ENCODE measurements at regions of chr2 and their contacts with region 1.

Region 1: DNA sequence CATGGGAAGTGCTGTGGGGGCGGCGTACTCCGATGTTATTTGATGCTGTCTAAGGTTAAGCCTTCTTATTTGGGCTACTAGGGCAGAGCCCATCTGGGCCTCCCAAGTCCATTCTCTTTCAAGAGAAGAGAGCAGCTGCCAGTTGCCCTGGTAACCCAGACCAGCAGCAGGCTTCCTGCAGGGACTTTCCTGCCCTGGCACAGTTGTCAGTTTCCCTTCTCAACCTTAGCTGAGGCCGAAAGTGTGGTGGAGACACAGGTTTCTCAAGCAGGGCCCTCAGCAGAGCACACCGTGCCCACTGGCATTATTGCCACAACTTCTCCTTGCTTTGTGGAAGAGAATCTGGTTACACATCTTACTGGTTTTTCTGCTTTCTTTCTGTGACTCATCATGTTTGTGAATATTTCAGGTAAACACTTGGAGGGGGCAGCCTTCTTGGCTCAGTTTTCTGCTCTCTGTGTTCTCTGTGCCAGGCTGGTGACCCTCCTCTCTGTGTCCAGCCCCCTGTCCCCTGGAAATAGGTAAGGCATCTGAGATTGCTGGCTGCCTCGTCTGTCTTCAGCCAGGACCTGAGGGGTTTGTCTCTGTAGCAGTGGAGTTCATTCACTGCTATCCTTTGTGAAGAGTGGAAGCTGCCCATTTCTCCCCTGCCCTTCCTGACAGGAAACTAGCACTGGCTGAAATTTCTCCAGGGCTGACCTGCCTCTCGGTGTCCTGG is 111.0 kb downstream of the B3GNT2 start:
- DNase-seq: peak; percentile 73
- H3K4me3 Mint-ChIP-seq: peak overlapping the region; percentile 22
- H3K27ac Mint-ChIP-seq: peak overlapping the region; percentile 72
- H3K4me1 Mint-ChIP-seq: peaks cover 75% of the 10 kb centered on the region
- H3K27me3 Mint-ChIP-seq: no peaks in the 10 kb centered on the region

Region 2: DNA sequence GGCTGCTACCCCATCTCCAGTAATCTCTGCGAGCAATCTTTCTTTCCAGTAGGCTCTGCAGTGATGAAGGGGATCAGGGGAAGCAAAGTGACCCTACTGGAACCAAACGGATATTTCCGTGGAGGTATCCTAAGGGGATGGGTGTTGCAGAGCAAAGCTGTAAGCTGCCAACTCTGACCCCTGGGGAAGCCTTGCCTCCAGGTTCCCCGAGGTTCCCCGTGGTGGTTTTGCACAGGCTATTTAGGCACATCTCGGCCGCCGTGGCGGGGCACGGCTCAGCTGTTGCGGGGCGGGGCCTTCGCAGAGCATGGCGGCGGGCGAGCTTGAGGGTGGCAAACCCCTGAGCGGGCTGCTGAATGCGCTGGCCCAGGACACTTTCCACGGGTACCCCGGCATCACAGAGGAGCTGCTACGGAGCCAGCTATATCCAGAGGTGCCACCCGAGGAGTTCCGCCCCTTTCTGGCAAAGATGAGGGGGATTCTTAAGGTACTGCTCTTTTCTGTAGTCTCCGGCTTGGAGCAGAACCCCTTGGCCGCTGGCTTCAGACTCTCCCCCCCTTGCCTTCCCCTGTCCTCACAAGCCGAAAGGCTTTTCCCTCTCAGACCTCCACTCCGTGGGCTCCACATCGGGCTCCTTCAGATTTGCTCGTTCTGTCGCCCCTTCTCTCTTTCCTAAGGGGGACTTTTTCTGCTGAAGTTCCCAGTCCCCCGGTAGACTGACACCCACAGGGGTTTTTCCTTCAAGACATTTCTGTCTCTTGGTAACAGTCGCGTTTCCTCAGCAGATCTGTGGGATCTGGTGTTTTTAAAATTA is 401.3 kb before region 1 on chr2 and contains the start of gene COMMD1:
- CTCF ChIA-PET with region 1: no interaction called
- POLR2A ChIA-PET with region 1: no interaction called
- intact Hi-C with region 1: loop called (anchors 5 kb)
- DNase-seq: peak; percentile 91
- H3K4me3 Mint-ChIP-seq: peak within 1 kb of the TSS; percentile 93
- H3K27ac Mint-ChIP-seq: peak within 1 kb of the TSS; percentile 56
- H3K4me1 Mint-ChIP-seq: peaks cover 19% of the 10 kb centered on the region
- H3K27me3 Mint-ChIP-seq: no peaks in the 10 kb centered on the region
- total RNA-seq, gene COMMD1: 33.0 to 33.8 TPM

Region 3: DNA sequence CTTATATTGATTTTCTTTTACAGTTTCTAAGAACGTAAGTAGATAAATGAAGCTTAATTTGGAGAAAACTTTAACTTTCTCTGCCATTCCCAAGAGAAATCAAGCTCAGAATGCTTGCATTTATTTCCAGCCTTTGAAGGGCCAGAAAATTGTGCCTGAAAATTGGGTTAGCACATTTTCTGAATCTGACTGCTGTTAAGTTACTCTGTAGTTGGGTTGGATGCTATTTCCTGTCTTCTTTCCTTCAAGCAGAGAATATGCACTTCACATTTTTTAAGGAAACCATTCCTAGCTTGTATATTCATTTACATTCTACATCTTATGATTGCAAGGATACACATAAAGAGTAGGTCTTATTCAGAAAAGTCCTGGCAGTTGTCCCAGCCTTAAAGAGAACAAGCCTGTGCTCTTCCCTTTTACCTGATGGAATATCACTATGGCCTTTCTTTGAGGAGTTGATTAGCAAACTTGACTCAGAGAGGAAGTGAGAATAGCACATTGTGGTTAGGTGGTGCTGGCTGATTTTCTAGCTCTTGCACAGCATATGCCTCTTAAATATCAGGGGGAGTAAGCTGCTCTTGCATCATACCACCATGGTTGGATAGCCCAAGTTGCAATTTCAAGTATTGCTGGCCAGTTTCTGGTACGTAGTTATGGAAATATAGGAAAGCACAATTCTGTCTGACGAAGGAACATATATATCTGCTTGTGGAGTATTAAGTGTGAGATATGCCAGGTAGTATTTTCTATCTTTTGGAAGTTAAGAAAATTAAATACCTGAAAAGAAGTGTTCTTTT is 267.7 kb before region 1 on chr2:
- CTCF ChIA-PET with region 1: no interaction called
- POLR2A ChIA-PET with region 1: no interaction called
- intact Hi-C with region 1: loop called (anchors 10 kb)
- DNase-seq: peak; percentile 42
- H3K4me3 Mint-ChIP-seq: no peak overlapping the region
- H3K27ac Mint-ChIP-seq: no peak overlapping the region
- H3K4me1 Mint-ChIP-seq: peaks cover 14% of the 10 kb centered on the region
- H3K27me3 Mint-ChIP-seq: no peaks in the 10 kb centered on the region

Region 4: DNA sequence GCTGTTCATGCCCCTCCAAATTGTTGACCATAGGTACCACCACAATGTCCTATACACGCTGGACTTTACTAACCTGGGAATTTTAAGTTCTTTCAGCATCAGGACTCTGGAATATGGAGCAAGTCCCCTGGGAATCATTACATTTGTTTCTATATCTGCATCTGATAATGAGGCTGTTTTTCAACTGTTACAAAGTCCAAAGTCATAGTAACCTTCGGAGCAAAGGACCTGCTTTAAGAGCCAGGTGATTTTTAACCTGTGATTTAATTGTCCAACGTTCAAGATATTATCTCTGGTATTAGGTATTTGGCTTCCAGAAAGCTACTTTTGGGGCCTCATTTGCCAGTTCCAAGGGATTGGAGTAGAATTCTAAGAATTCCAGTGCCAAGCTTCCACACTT is 118.5 kb before region 1 on chr2:
- CTCF ChIA-PET with region 1: no interaction called
- POLR2A ChIA-PET with region 1: no interaction called
- intact Hi-C with region 1: no loop called
- DNase-seq: no peak
- H3K4me3 Mint-ChIP-seq: no peak overlapping the region
- H3K27ac Mint-ChIP-seq: no peak overlapping the region
- H3K4me1 Mint-ChIP-seq: no peaks in the 10 kb centered on the region
- H3K27me3 Mint-ChIP-seq: no peaks in the 10 kb centered on the region

Region 5: DNA sequence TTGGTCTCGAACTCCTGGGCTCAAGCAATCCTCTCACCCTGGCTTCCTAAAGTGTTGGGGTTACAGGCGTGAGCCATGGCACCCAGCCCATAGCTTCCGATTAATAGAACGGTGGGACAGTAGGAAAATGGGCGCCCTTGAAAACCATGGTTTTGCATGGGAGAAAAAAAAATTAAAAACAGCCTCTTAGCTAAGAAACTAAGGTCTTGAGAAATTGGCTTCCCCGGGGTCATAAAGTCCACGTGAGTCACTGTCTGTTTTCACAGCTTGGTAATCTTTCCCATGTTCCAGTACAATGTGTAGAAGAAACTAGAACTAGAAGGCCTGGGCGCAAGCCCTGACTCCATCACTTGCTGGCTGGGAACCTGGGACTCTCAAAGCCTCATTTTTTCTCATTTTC is 90.3 kb before region 1 on chr2:
- CTCF ChIA-PET with region 1: no interaction called
- POLR2A ChIA-PET with region 1: no interaction called
- intact Hi-C with region 1: loop called (anchors 5 kb)
- DNase-seq: peak; percentile 22
- H3K4me3 Mint-ChIP-seq: no peak overlapping the region
- H3K27ac Mint-ChIP-seq: peak overlapping the region; percentile 43
- H3K4me1 Mint-ChIP-seq: peaks cover 83% of the 10 kb centered on the region
- H3K27me3 Mint-ChIP-seq: no peaks in the 10 kb centered on the region

Region 6: GRCh38 chr2:62321380-62322289 is 14.7 kb after region 1 on chr2:
- CTCF ChIA-PET with region 1: no interaction called
- POLR2A ChIA-PET with region 1: no interaction called
- intact Hi-C with region 1: loop called (anchors 2 kb)
- DNase-seq: no peak
- H3K4me3 Mint-ChIP-seq: no peak overlapping the region
- H3K27ac Mint-ChIP-seq: no peak overlapping the region
- H3K4me1 Mint-ChIP-seq: peaks cover 6% of the 10 kb centered on the region
- H3K27me3 Mint-ChIP-seq: no peaks in the 10 kb centered on the region

Region 7: GRCh38 chr2:62410015-62410453 is 103.1 kb after region 1 on chr2:
- CTCF ChIA-PET with region 1: no interaction called
- POLR2A ChIA-PET with region 1: no interaction called
- intact Hi-C with region 1: loop called (anchors 5 kb)
- DNase-seq: no peak
- H3K4me3 Mint-ChIP-seq: no peak overlapping the region
- H3K27ac Mint-ChIP-seq: no peak overlapping the region
- H3K4me1 Mint-ChIP-seq: peaks cover 3% of the 10 kb centered on the region
- H3K27me3 Mint-ChIP-seq: no peaks in the 10 kb centered on the region

Region 8: GRCh38 chr2:62705007-62705829 is 398.3 kb after region 1 on chr2 and contains the start of gene EHBP1:
- CTCF ChIA-PET with region 1: no interaction called
- POLR2A ChIA-PET with region 1: no interaction called
- intact Hi-C with region 1: loop called (anchors 5 kb)
- DNase-seq: peak; percentile 98
- H3K4me3 Mint-ChIP-seq: peak within 1 kb of the TSS; percentile 76
- H3K27ac Mint-ChIP-seq: peak within 1 kb of the TSS; percentile 74
- H3K4me1 Mint-ChIP-seq: peaks cover 28% of the 10 kb centered on the region
- H3K27me3 Mint-ChIP-seq: no peaks in the 10 kb centered on the region
- total RNA-seq, gene EHBP1: 23.5 to 23.6 TPM

Region 9: DNA sequence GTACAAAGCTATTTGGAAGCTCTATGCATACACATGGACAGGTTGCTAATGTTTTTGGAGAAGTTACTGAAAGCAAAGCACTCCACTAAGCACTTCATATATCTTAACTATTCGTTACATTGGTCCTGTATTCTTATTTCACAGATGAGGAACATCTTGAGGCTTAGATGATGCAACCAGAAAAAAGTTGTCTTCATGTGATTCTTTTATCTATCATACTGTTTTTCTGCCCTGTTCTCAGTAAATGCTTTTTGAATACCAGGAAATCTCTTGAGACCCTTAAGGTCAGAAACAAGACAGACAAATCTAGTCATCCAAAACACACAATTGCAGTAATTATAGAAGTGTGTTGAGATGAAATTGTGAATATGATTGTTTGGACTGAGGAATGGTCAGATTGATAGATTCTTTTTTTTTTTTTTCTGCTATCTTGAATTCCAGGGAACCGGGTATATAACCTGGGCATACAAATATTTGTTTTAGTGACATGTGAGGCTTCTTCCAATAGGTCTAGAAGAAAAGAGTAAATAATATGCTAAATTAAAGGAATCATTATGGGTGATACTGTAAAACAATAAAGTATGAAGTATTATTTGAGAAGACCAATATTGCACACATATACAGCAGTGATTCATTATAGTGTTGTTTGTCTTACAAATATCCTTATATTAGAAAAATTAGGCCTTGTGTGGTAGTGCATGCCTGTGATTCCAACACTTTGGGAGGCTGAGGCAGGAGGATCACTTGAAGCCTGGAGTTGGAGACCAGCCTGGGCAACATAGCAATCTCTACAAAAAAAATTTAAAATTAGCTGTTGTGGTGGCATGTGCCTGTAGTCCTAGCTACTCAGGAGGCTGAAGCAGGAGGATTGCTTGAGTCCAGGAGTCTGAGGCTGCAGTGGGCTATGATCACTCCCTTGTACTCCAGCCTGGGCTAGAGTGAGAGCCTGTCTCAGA is 432.3 kb after region 1 on chr2:
- CTCF ChIA-PET with region 1: no interaction called
- POLR2A ChIA-PET with region 1: no interaction called
- intact Hi-C with region 1: no loop called
- DNase-seq: no peak
- H3K4me3 Mint-ChIP-seq: no peak overlapping the region
- H3K27ac Mint-ChIP-seq: no peak overlapping the region
- H3K4me1 Mint-ChIP-seq: peaks cover 5% of the 10 kb centered on the region
- H3K27me3 Mint-ChIP-seq: no peaks in the 10 kb centered on the region

Measured in activated CD4-positive, alpha-beta memory T cell treated with anti-CD3 and anti-CD28 coated beads for 36 hours (primary cell).